ENCODE measurements at regions of chr12 and their contacts with region 1.

Region 1: DNA sequence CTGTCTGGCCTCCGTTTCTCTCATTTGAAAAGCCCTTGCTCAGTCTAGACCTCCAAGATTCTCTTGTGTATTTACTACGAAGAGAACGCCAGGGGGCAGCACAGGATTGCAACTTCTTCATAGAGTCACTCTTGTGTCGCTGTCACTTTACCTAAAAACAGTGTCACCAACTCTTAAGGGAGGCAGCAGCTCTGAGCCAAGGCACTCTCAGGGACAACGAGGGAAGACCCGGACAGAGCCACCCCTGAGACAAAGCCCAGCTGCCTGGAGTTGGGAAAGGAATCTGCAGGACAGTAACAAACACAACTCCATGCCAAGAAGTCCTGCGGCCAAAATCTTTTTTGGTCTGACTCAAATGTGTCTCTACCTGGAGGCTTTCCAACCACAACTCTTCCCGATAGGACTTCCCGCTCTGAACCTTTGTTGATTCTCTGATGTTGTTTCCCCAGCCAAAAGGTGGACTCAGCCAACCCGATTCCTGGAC is 9.6 kb upstream of the RPAP3 start:
- DNase-seq: peak; percentile 56 to 61
- H3K4me3 ChIP-seq: no peak overlapping the region
- H3K27ac ChIP-seq: no peak overlapping the region
- H3K4me1 ChIP-seq: no peaks in the 10 kb centered on the region
- H3K27me3 ChIP-seq: no peaks in the 10 kb centered on the region
- CTCF ChIP-seq: peak; percentile 91

Region 2: GRCh38 chr12:47517122-47517521 is 198.3 kb before region 1 on chr12:
- CTCF ChIA-PET with region 1: no interaction called
- POLR2A ChIA-PET with region 1: no interaction called
- intact Hi-C with region 1: no loop called
- DNase-seq: no peak
- H3K4me3 ChIP-seq: no peak overlapping the region
- H3K27ac ChIP-seq: no peak overlapping the region
- H3K4me1 ChIP-seq: no peaks in the 10 kb centered on the region
- H3K27me3 ChIP-seq: no peaks in the 10 kb centered on the region
- CTCF ChIP-seq: no peak

Region 3: GRCh38 chr12:47742253-47742825 is 26.9 kb after region 1 on chr12:
- CTCF ChIA-PET with region 1: interaction called, 6 read pairs
- POLR2A ChIA-PET with region 1: no interaction called
- intact Hi-C with region 1: loop called (anchors 1 kb)
- DNase-seq: peak in 1 of 2 experiments; percentile 66
- H3K4me3 ChIP-seq: no peak overlapping the region
- H3K27ac ChIP-seq: no peak overlapping the region
- H3K4me1 ChIP-seq: peaks cover 8% of the 10 kb centered on the region
- H3K27me3 ChIP-seq: no peaks in the 10 kb centered on the region
- CTCF ChIP-seq: peak; percentile 100

Region 4: GRCh38 chr12:47949441-47950308 is 234.2 kb after region 1 on chr12:
- CTCF ChIA-PET with region 1: no interaction called
- POLR2A ChIA-PET with region 1: no interaction called
- intact Hi-C with region 1: loop called (anchors 5 kb)
- DNase-seq: peak; percentile 66 to 79
- H3K4me3 ChIP-seq: no peak overlapping the region
- H3K27ac ChIP-seq: no peak overlapping the region
- H3K4me1 ChIP-seq: peaks cover 51% of the 10 kb centered on the region
- H3K27me3 ChIP-seq: no peaks in the 10 kb centered on the region
- CTCF ChIP-seq: peak; percentile 93

Region 5: GRCh38 chr12:48165094-48165981 is 449.9 kb after region 1 on chr12:
- CTCF ChIA-PET with region 1: no interaction called
- POLR2A ChIA-PET with region 1: no interaction called
- intact Hi-C with region 1: loop called (anchors 1 kb)
- DNase-seq: peak in 1 of 2 experiments; percentile 29
- H3K4me3 ChIP-seq: no peak overlapping the region
- H3K27ac ChIP-seq: no peak overlapping the region
- H3K4me1 ChIP-seq: no peaks in the 10 kb centered on the region
- H3K27me3 ChIP-seq: no peaks in the 10 kb centered on the region
- CTCF ChIP-seq: peak; percentile 91

Region 6: GRCh38 chr12:48189331-48190125 is 474.1 kb after region 1 on chr12:
- CTCF ChIA-PET with region 1: no interaction called
- POLR2A ChIA-PET with region 1: no interaction called
- intact Hi-C with region 1: loop called (anchors 1 kb)
- DNase-seq: peak; percentile 47 to 68
- H3K4me3 ChIP-seq: no peak overlapping the region
- H3K27ac ChIP-seq: no peak overlapping the region
- H3K4me1 ChIP-seq: 0 out of 2 replicates have a peak, but pooled peaks cover 8% of the 10 kb centered on the region
- H3K27me3 ChIP-seq: peaks cover 7% of the 10 kb centered on the region; the same call in 1 of the 2 replicates
- CTCF ChIP-seq: peak; percentile 92

Region 7: DNA sequence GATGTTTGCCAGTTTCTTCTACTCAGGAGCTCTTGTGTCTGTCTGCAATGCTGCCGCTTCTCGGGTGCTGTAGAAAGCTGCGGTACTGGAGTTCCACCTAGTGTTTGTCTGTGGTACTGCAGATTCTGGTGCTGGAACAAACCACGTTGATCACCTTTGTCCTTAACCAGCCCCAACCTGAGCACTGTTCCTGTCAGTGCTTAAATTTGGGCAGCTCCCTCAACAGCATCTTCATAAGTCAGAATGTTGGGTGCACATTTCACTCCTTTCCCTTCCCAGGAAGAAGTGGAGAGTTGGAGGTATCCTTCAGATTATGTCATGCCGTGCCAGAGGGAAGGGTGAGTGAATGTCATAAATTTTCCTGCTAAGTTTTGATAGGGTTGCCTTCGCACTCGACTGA is 903.1 kb after region 1 on chr12:
- CTCF ChIA-PET with region 1: no interaction called
- POLR2A ChIA-PET with region 1: no interaction called
- intact Hi-C with region 1: loop called (anchors 1 kb)
- DNase-seq: peak; percentile 63 to 69
- H3K4me3 ChIP-seq: no peak overlapping the region
- H3K27ac ChIP-seq: no peak overlapping the region
- H3K4me1 ChIP-seq: no peaks in the 10 kb centered on the region
- H3K27me3 ChIP-seq: peaks cover 27% of the 10 kb centered on the region
- CTCF ChIP-seq: peak; percentile 97